A673 (cell line): ENCODE measurements at regions of chr13 and their contacts with region 1.

Region 1: DNA sequence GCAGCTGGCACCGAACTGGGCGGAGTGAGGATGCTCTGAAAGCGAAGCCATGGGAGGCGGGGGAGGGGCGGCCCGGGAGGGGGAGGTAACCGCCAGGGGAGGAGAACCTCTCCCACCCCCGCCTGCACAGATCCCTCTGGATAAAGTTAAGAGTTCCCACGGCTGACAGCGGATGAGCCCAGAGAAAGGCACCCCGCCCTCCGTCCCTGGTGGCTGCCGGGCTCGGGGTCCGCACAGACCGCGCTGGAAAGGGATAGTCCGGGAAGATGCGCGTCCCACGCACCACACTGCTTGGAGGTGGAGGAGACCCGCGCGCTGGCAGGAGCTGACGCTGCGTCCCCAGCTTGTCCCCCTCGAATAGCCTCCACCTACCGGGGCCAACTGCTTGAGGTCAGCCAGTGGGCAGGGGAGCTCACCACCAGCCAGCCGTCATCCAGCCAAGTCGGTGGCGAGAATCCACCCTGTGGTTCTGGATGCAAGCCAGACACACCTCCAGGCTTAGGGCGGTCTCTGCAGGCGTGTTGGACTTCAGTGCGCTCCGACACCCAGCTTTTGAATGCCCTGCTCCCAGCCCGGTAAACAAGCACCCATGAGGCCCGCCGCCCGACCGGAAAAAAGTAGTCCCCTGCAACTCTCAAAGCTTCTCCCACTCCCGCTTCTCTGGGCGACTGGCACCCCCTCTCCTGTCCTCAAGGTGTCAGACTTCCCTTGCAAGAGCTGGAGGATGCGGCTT is at the start of gene TRPC4:
- DNase-seq: peak; percentile 96
- H3K4me3 ChIP-seq: peak within 1 kb of the TSS; percentile 57
- H3K27ac ChIP-seq: peak within 1 kb of the TSS; percentile 42
- H3K4me1 ChIP-seq: peaks cover 25% of the 10 kb centered on the region
- H3K27me3 ChIP-seq: peaks cover 19% of the 10 kb centered on the region
- CTCF ChIP-seq: peak; percentile 92
- total RNA-seq, gene TRPC4: 25.3 and 27.0 TPM in 2 replicates

Region 2: DNA sequence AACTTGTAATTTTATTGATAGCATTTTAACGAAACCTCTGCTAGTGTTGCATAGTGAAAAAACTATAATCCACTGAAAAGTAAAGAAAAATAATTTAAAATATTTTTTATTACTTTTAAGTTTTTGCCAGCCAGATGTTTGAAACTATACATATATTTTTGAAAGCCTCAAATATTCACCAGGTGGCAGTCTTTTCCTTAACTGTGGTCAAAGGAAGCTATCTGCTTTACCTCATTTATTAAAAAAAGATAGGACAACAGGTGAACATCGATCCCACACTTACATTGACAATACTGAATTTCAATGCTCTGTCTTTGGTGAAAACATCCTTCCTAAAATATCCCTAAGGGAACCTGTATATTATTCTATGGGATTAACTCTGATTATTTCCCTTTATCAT is 100.8 kb before region 1 on chr13:
- CTCF ChIA-PET with region 1: interaction called, 9 read pairs
- POLR2A ChIA-PET with region 1: no interaction called
- intact Hi-C with region 1: loop called (anchors 2 kb)
- DNase-seq: peak; percentile 43
- H3K4me3 ChIP-seq: no peak overlapping the region
- H3K27ac ChIP-seq: no peak overlapping the region
- H3K4me1 ChIP-seq: no peaks in the 10 kb centered on the region
- H3K27me3 ChIP-seq: no peaks in the 10 kb centered on the region
- CTCF ChIP-seq: peak; percentile 55; the same call in 1 of the 2 replicates

Region 3: DNA sequence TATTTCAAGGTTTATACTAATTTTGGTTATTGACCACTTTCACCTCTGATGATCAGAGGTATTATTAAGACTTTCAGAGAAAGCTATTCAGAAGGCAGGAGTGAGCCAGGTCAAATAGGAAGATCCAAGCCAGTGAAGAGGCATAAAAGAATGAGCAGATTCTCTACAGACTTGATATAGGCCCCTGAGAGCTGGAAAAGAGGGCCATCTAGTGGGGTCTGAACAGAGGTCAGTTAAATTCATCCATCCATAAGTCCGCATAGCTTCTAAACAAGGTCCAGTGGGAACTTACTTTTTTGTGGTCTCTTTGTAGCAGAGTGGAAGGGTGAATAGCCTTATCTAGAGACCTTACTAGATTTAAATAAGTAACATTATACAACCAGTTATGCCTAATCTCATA is 353.2 kb after region 1 on chr13:
- CTCF ChIA-PET with region 1: interaction called, 6 read pairs
- POLR2A ChIA-PET with region 1: no interaction called
- intact Hi-C with region 1: loop called (anchors 1 kb)
- DNase-seq: peak; percentile 70
- H3K4me3 ChIP-seq: no peak overlapping the region
- H3K27ac ChIP-seq: no peak overlapping the region
- H3K4me1 ChIP-seq: no peaks in the 10 kb centered on the region
- H3K27me3 ChIP-seq: no peaks in the 10 kb centered on the region
- CTCF ChIP-seq: peak; percentile 59

Region 4: DNA sequence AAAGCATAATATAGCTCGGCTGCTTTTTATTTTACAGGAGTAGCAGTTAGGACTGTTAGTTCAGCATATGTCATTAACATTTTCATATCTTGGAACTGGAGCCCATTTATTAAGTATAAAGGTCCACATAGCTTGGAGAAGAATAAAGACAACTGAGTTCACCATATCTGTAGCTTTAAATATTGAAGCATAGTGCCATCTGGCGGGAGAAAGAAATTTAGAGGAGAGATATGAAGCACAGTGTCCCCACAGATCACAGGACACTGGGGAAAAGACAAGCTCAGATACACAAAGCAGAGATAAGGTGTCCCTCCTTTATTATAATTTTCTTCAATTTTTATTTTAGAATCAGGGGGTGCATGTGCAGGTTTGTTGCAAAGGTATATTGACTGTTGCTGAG is 712.2 kb after region 1 on chr13:
- CTCF ChIA-PET with region 1: interaction called, 3 read pairs
- POLR2A ChIA-PET with region 1: no interaction called
- intact Hi-C with region 1: loop called (anchors 5 kb)
- DNase-seq: peak; percentile 82
- H3K4me3 ChIP-seq: no peak overlapping the region
- H3K27ac ChIP-seq: no peak overlapping the region
- H3K4me1 ChIP-seq: peaks cover 6% of the 10 kb centered on the region
- H3K27me3 ChIP-seq: no peaks in the 10 kb centered on the region
- CTCF ChIP-seq: peak; percentile 81